ENCODE measurements at regions of chr16 and their contacts with region 1.

Region 1: GRCh38 chr16:31785126-31785525 is 88.5 kb upstream of the ZNF267 start:
- DNase-seq: no peak
- ATAC-seq: no peak
- H3K4me3 ChIP-seq: no peak overlapping the region
- H3K27ac ChIP-seq: no peak overlapping the region
- H3K4me1 ChIP-seq: no peaks in the 10 kb centered on the region
- H3K27me3 ChIP-seq: no peaks in the 10 kb centered on the region
- CTCF ChIP-seq: no peak
- POLR2A ChIP-seq: no peak

Region 2: GRCh38 chr16:31745900-31746299 is 39.2 kb before region 1 on chr16:
- intact Hi-C with region 1: loop called in 1 of 10 experiments (anchors 5 kb)
- DNase-seq: no peak
- ATAC-seq: no peak
- H3K4me3 ChIP-seq: no peak overlapping the region
- H3K27ac ChIP-seq: no peak overlapping the region
- H3K4me1 ChIP-seq: no peaks in the 10 kb centered on the region
- H3K27me3 ChIP-seq: no peaks in the 10 kb centered on the region
- CTCF ChIP-seq: no peak
- POLR2A ChIP-seq: no peak

Region 3: DNA sequence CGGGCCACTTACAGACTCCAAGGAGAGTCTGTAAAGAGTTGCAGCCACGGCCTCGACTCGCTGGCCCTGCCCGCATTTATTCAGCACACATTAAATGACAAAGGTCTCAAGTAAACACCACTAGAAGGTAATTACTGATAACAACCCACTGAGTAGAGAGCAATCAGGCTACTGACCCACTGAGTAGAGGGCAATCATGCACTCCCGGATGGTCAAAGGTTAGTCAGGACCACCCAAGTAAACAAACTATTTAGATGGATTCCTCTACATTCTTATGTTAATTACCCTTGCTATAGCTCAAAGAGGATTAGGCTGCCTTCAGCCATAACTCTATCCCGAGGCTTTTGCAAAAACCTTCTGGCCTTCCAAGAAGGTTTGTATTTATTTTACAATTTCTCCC is 57.7 kb after region 1 on chr16:
- intact Hi-C with region 1: loop called in 1 of 10 experiments (anchors 10 kb)
- DNase-seq: no peak
- ATAC-seq: no peak
- H3K4me3 ChIP-seq: no peak overlapping the region
- H3K27ac ChIP-seq: no peak overlapping the region
- H3K4me1 ChIP-seq: no peaks in the 10 kb centered on the region
- H3K27me3 ChIP-seq: no peaks in the 10 kb centered on the region
- CTCF ChIP-seq: no peak
- POLR2A ChIP-seq: no peak